Activated T-helper 2 cell treated with anti-CD3 and anti-CD28 coated beads, Interferon-gamma antibody, Interleukin-2, Interleukin-4, amounts not matched to agents 10 μg/mL and 5 μg/mL and 100 μg/mL, durations not matched to agents 14 hours and 24 hours and 36 hours (primary cell): ENCODE measurements at regions of chr6 and their contacts with region 1.

Region 1: GRCh38 chr6:135423649-135424128 is 73.9 kb downstream of the AHI1 start:
- DNase-seq: no peak
- H3K4me3 Mint-ChIP-seq: no peak overlapping the region
- H3K27ac Mint-ChIP-seq: peak overlapping the region; percentile 38
- H3K4me1 Mint-ChIP-seq: peaks cover 32% of the 10 kb centered on the region
- H3K27me3 Mint-ChIP-seq: no peaks in the 10 kb centered on the region

Region 2: DNA sequence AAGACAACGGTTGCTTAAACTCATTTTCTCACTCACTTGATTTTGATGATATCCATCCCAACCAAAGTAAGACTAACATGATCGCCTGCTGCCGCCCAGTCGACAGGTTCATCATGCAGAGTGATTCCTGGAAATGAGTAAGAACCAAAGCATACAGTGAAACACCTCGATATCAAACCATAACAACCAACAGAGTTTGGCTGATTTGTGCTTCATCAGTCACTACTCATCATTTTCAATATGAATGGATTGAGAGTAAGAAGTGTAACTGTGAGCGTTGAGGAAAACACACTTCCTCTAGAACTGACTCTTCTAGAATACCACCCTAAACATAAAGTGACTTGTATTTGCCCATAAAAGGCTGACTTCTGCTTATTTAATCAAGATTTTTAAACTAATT is 444.5 kb before region 1 on chr6:
- intact Hi-C with region 1: loop called (anchors 1 kb)
- DNase-seq: peak; percentile 55
- H3K4me3 Mint-ChIP-seq: peak overlapping the region; percentile 57
- H3K27ac Mint-ChIP-seq: peak overlapping the region; percentile 78
- H3K4me1 Mint-ChIP-seq: peaks cover 52% of the 10 kb centered on the region
- H3K27me3 Mint-ChIP-seq: no peaks in the 10 kb centered on the region

Region 3: DNA sequence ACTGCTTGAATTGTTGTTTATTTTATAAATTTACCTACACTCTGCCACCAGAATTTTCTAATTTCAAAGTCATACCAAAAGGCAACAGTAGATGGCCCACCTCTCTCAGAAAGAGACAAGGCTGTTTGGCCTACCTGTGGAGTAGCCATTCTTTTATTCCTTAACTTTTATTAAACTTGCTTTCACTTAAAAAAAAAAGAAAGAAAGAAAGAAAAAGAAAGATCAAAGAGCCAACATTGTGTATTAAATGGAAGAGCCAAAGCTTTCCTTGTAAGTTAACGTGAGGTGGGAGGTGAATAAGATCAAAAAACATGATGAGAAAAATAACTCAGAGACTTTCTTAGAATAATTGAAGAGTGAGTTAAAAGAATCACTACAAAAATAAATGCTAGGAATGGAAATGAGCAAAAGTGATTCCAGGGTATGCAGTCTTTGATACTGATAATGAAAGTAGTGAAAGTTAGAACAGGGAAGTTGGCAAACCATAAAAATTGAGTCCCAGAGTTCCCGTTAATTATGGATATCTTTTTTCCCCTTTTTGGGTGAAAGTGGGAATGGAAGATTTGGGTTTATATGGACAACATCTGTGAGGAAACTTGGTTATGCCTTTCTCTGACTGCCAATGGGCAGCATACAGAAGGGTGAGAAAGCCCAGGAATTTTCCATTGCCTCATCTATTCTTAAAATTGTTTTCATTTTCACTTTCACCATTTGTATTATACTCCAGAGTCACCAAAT is 278.5 kb before region 1 on chr6:
- intact Hi-C with region 1: loop called (anchors 5 kb)
- DNase-seq: no peak
- H3K4me3 Mint-ChIP-seq: peak overlapping the region; percentile 55
- H3K27ac Mint-ChIP-seq: peak overlapping the region; percentile 89
- H3K4me1 Mint-ChIP-seq: peaks cover 64% of the 10 kb centered on the region
- H3K27me3 Mint-ChIP-seq: no peaks in the 10 kb centered on the region

Region 4: DNA sequence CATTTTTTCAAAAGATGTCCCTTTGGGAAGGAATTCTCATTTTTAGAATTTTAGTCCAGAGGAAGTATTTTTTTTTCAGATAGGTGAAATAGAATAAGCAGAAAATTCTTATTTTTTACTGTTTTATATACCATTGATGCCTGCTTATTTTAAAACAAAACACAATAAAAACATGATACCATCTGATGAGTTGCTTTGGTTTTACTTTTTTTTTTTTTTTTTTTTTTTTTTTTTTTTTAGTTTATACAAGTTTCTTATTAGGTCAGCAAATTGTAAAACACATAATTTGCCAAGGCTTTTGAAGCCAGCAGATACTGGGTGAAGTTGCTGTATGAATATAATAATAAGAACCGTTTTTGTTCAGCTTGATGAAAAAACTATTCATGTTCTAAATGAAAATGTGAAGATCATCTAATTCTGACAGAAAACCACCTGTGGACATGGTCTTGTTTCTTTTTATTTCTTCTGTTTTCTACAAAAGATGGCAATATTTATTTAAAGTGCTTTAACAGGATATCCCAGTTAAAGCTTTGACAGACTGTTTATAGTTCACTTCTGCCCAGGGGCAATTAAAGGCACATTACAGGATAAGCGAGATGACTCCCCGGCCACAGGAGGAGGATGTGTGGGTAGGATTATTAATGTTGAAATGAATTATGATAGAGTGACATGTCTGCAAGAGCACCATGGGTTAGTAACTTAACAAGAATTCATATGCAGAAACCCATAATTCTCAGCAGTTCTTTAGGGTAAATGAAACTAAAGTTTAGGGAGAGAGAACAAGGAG is 211.5 kb before region 1 on chr6:
- intact Hi-C with region 1: loop called (anchors 5 kb)
- DNase-seq: no peak
- H3K4me3 Mint-ChIP-seq: peak overlapping the region; percentile 38
- H3K27ac Mint-ChIP-seq: peak overlapping the region; percentile 88
- H3K4me1 Mint-ChIP-seq: peaks cover 51% of the 10 kb centered on the region
- H3K27me3 Mint-ChIP-seq: no peaks in the 10 kb centered on the region

Region 5: GRCh38 chr6:135382182-135382628 is 41.5 kb before region 1 on chr6:
- intact Hi-C with region 1: loop called (anchors 1 kb)
- DNase-seq: no peak
- H3K4me3 Mint-ChIP-seq: no peak overlapping the region
- H3K27ac Mint-ChIP-seq: no peak overlapping the region
- H3K4me1 Mint-ChIP-seq: peaks cover 14% of the 10 kb centered on the region
- H3K27me3 Mint-ChIP-seq: no peaks in the 10 kb centered on the region